Activated naive CD4-positive, alpha-beta T cell treated with anti-CD3 and anti-CD28 coated beads, Interleukin-2, amount 10 ng/mL, durations not matched to agents 7 days and 5 days (primary cell): ENCODE measurements at regions of chr12 and their contacts with region 1.

Region 1: GRCh38 chr12:1939801-1940607 is 21.6 kb upstream of the CACNA2D4 start:
- DNase-seq: peak; percentile 92
- H3K4me3 Mint-ChIP-seq: no peak overlapping the region
- H3K27ac Mint-ChIP-seq: no peak overlapping the region
- H3K4me1 Mint-ChIP-seq: peaks cover 4% of the 10 kb centered on the region
- H3K27me3 Mint-ChIP-seq: no peaks in the 10 kb centered on the region

Region 2: DNA sequence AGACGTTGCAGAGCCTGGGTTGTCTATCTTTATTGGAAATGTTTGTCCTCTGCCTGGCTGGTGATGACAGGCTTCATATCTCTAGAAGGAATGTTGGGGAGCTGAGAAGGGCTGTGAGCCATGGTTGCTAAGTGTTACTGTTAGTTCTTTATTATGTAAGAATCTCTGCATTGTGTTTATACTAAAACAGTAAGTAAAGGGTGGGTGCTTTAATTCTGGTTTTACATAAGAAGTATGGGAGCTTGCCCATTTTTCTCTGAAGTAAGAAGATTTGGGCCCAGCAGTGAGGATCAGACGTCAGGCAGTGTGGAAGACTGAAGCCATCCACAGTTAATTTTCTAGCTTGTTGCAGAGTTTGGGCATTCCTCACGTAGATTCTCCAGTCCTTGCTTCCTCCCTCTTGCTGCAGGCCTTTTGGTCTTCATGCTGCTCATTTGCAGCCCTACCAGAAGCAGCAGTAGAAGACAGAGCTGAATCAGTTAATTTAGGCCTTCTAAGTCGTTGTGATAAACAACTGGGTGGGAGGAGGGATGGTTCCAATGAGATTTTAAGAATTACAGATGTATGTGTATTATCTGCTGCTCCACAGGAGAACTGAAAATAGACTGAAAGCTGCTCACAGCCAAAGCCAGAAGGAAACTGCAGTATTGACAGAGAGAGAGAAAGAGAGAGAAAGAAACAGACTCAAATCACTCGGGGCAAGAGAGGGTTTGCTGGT is 289.6 kb before region 1 on chr12:
- CTCF ChIA-PET with region 1: interaction called, 28 read pairs
- DNase-seq: no peak
- H3K4me3 Mint-ChIP-seq: no peak overlapping the region
- H3K27ac Mint-ChIP-seq: no peak overlapping the region
- H3K4me1 Mint-ChIP-seq: peaks cover 6% of the 10 kb centered on the region
- H3K27me3 Mint-ChIP-seq: peaks cover 71% of the 10 kb centered on the region

Region 3: GRCh38 chr12:1698638-1699214 is 241.3 kb before region 1 on chr12:
- CTCF ChIA-PET with region 1: no interaction called
- DNase-seq: no peak
- H3K4me3 Mint-ChIP-seq: no peak overlapping the region
- H3K27ac Mint-ChIP-seq: no peak overlapping the region
- H3K4me1 Mint-ChIP-seq: peaks cover 30% of the 10 kb centered on the region
- H3K27me3 Mint-ChIP-seq: no peaks in the 10 kb centered on the region

Region 4: GRCh38 chr12:1795785-1796514 is 144.1 kb before region 1 on chr12:
- CTCF ChIA-PET with region 1: interaction called, 110 read pairs
- DNase-seq: peak; percentile 95
- H3K4me3 Mint-ChIP-seq: peak overlapping the region; percentile 88
- H3K27ac Mint-ChIP-seq: peak overlapping the region; percentile 91
- H3K4me1 Mint-ChIP-seq: peaks cover 21% of the 10 kb centered on the region
- H3K27me3 Mint-ChIP-seq: peaks cover 15% of the 10 kb centered on the region

Region 5: GRCh38 chr12:1916371-1917171 is 23.4 kb before region 1 on chr12:
- CTCF ChIA-PET with region 1: interaction called, 18 read pairs
- DNase-seq: peak; percentile 15
- H3K4me3 Mint-ChIP-seq: no peak overlapping the region
- H3K27ac Mint-ChIP-seq: peak overlapping the region; percentile 89
- H3K4me1 Mint-ChIP-seq: peaks cover 31% of the 10 kb centered on the region
- H3K27me3 Mint-ChIP-seq: peaks cover 54% of the 10 kb centered on the region

Region 6: GRCh38 chr12:2170376-2170775 is 230.4 kb after region 1 on chr12:
- CTCF ChIA-PET with region 1: no interaction called
- DNase-seq: no peak
- H3K4me3 Mint-ChIP-seq: no peak overlapping the region
- H3K27ac Mint-ChIP-seq: no peak overlapping the region
- H3K4me1 Mint-ChIP-seq: no peaks in the 10 kb centered on the region
- H3K27me3 Mint-ChIP-seq: peaks cover 4% of the 10 kb centered on the region